ENCODE measurements at regions of chr17 and their contacts with region 1.

Region 1: DNA sequence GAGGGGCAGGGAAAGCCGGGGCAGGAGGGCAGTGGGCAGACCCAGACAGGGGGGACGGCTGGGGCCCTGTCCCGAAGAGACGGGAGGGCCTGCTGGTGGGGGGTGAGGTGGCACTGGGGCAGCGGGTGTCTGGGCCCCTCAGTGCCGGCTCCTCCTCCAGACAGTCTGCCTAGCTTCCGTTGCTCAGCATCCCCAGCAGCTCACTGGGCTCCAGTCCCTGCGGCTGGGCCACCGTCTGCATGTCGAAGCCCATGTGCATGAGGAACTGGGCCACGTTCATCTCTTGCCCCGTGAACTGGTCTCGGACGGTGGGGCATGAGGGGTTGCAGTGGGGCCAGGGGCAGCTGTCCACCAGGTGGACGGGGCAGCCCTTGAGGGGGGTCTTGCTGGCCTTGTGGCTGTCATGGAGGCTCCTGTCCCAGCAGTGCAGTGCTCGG is 5.8 kb upstream of the MYADML2 start:
- DNase-seq: no peak
- ATAC-seq: peak; percentile 11
- H3K4me3 ChIP-seq: no peak overlapping the region
- H3K27ac ChIP-seq: peak overlapping the region; percentile 24
- H3K4me1 ChIP-seq: peaks cover 63% of the 10 kb centered on the region
- H3K27me3 ChIP-seq: no peaks in the 10 kb centered on the region
- CTCF ChIP-seq: no peak
- EP300 ChIP-seq: no peak
- POLR2A ChIP-seq: no peak; a peak in 1 of 4 replicates
- RAD21 ChIP-seq: no peak

Region 2: GRCh38 chr17:81651692-81652091 is 301.1 kb before region 1 on chr17:
- CTCF ChIA-PET with region 1: no interaction called
- POLR2A ChIA-PET with region 1: no interaction called
- in situ Hi-C with region 1: no loop called
- intact Hi-C with region 1: no loop called
- DNase-seq: peak; percentile 59
- ATAC-seq: peak; percentile 59
- H3K4me3 ChIP-seq: peak overlapping the region in 1 of 3 experiments; percentile 27; a peak in 1 of 6 replicates
- H3K27ac ChIP-seq: no peak overlapping the region
- H3K4me1 ChIP-seq: peaks cover 50% of the 10 kb centered on the region
- H3K27me3 ChIP-seq: peaks cover 0 to 17% of the 10 kb centered on the region in 2 experiments; a peak in 3 of 5 replicates
- CTCF ChIP-seq: no peak
- EP300 ChIP-seq: no peak
- POLR2A ChIP-seq: no peak
- RAD21 ChIP-seq: no peak

Region 3: GRCh38 chr17:81941790-81942553 is 10.8 kb before region 1 on chr17:
- CTCF ChIA-PET with region 1: no interaction called
- POLR2A ChIA-PET with region 1: interaction called, 58 read pairs
- in situ Hi-C with region 1: no loop called
- intact Hi-C with region 1: loop called (anchors 1 kb)
- DNase-seq: no peak
- ATAC-seq: peak; percentile 33
- H3K4me3 ChIP-seq: no peak overlapping the region; a peak in 1 of 6 replicates
- H3K27ac ChIP-seq: no peak overlapping the region
- H3K4me1 ChIP-seq: peaks cover 67% of the 10 kb centered on the region
- H3K27me3 ChIP-seq: peaks cover 16 to 33% of the 10 kb centered on the region in 2 experiments; a peak in 4 of 5 replicates
- CTCF ChIP-seq: no peak
- EP300 ChIP-seq: no peak
- POLR2A ChIP-seq: no peak
- RAD21 ChIP-seq: no peak

Region 4: DNA sequence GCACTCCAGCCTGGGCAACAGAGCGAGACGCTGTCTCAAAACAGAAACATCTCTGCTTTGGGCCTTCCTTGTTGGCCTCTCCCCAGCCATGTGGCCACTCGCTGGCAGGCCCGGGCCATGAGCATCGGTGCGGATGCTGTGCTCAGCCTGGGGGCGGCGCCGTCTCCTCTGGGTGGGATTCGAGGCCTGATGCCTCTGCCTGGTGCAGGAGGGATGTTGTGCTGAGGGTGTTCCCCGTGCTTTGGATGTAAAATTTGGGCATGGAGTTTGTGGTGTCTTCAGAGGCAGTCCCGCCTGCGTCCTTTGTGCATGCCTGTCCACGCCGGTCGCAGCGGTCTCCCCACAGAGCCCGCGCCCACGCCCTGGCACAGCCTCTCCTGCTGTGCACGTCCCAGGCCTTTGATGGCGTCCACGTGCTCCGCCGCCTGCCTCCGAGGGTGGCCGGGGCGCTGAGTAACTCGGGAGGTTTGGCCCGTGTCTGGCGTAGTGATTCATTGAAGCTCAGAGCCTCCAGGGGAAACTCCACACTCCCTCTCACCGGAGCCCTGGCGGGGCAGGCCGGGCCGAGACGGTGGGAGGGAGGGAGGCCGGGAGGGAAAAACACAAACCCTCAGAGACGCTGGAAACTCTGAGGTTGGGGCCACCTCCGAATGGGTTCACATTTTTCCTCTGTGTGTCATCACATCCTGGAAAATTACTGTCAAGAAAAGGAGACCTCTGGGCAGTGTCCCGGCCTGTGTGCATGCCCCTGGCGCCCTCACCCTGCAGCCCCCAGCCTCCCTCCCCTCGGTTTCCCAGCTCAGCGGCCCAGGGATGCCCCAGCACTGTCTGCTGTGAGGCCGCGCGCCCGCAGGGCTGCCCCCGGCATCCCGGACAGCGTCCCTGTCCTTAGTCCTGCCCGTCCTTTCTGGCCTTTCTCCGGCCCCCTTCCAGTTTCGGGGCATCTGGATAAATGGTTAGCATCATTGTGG is 50.9 kb after region 1 on chr17:
- CTCF ChIA-PET with region 1: no interaction called
- POLR2A ChIA-PET with region 1: interaction called, 18 read pairs
- in situ Hi-C with region 1: loop called (anchors 5 kb)
- intact Hi-C with region 1: no loop called
- DNase-seq: peak; percentile 92
- ATAC-seq: peak; percentile 8
- H3K4me3 ChIP-seq: peak overlapping the region in 1 of 3 experiments; percentile 29; a peak in 1 of 6 replicates
- H3K27ac ChIP-seq: peak overlapping the region; percentile 95
- H3K4me1 ChIP-seq: peaks cover 76% of the 10 kb centered on the region
- H3K27me3 ChIP-seq: no peaks in the 10 kb centered on the region
- CTCF ChIP-seq: peak; percentile 51
- EP300 ChIP-seq: peak in 1 of 2 experiments; percentile 85; a peak in 2 of 4 replicates
- POLR2A ChIP-seq: no peak
- RAD21 ChIP-seq: no peak; the same call in 1 of the 2 replicates

Region 5: GRCh38 chr17:82065638-82066303 is 113.0 kb after region 1 on chr17 and contains the start of gene DUS1L:
- CTCF ChIA-PET with region 1: no interaction called
- POLR2A ChIA-PET with region 1: no interaction called
- in situ Hi-C with region 1: no loop called
- intact Hi-C with region 1: no loop called
- DNase-seq: no peak
- ATAC-seq: peak; percentile 27
- H3K4me3 ChIP-seq: peak within 1 kb of the TSS; percentile 69 to 99 (median 92)
- H3K27ac ChIP-seq: peak within 1 kb of the TSS; percentile 64
- H3K4me1 ChIP-seq: peaks cover 28% of the 10 kb centered on the region
- H3K27me3 ChIP-seq: no peaks in the 10 kb centered on the region
- CTCF ChIP-seq: peak; percentile 42
- EP300 ChIP-seq: peak; percentile 46 to 48; a peak in 1 of 4 replicates
- POLR2A ChIP-seq: 0 out of 4 replicates have a peak, but pooled peaks of 1 of the 2 experiments have one; percentile 38
- RAD21 ChIP-seq: peak; percentile 51; the same call in 1 of the 2 replicates
- total RNA-seq, gene DUS1L: 67.9 and 109 TPM in 2 replicates

Region 6: DNA sequence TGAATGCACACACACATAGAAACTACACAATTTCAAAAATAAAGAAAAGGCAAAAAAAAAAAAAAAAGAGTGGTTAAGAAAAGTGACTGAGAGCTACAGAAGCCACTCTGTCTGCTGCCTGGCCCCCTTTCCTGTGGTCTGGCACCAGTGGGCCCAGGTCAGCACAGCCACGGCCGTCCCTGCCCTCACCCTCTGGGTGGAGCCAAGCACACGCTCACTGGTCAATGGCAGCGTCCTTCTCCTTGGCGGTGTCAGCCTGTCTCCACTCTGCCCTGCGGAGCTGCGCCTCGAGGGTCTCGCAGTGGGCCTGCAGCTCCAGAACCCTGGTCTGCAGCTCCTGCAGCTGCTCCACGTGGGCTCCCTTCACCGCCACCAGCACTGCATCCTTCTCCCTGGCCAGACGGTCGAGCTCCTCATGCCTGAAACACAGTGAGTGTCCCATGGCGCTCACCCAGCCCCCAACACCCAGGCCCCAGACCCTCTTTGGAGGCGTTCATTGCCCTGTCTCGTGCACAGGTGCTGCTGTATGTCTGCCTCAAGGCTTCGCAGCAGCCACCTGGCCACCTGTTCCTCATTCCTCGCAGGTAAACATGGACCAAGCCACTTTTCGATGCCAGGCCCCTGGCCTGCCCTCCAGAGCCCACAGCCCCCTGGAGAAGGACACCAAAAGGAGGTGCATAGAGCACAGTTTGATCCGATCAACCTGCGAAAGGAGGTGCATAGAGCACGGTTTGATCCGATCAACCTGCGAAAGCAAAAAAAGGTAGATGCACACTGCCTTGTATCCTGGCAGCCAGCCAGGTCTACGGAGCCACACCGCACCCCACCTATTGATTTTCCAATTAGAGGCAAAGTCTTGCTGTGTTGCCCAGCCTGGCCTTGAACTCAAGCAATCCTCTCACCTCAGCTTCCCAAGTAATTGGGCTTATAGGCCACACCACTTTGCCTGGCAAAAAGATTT is 235.5 kb after region 1 on chr17:
- CTCF ChIA-PET with region 1: no interaction called
- POLR2A ChIA-PET with region 1: no interaction called
- in situ Hi-C with region 1: no loop called
- intact Hi-C with region 1: no loop called
- DNase-seq: no peak
- ATAC-seq: peak; percentile 42
- H3K4me3 ChIP-seq: no peak overlapping the region
- H3K27ac ChIP-seq: no peak overlapping the region
- H3K4me1 ChIP-seq: peaks cover 8% of the 10 kb centered on the region
- H3K27me3 ChIP-seq: no peaks in the 10 kb centered on the region
- CTCF ChIP-seq: 0 out of 2 replicates have a peak, but pooled peaks have one; percentile 20
- EP300 ChIP-seq: no peak
- POLR2A ChIP-seq: no peak
- RAD21 ChIP-seq: no peak